Naive thymus-derived CD4-positive, alpha-beta T cell (primary cell): ENCODE measurements at regions of chr1 and their contacts with region 1.

Region 1: DNA sequence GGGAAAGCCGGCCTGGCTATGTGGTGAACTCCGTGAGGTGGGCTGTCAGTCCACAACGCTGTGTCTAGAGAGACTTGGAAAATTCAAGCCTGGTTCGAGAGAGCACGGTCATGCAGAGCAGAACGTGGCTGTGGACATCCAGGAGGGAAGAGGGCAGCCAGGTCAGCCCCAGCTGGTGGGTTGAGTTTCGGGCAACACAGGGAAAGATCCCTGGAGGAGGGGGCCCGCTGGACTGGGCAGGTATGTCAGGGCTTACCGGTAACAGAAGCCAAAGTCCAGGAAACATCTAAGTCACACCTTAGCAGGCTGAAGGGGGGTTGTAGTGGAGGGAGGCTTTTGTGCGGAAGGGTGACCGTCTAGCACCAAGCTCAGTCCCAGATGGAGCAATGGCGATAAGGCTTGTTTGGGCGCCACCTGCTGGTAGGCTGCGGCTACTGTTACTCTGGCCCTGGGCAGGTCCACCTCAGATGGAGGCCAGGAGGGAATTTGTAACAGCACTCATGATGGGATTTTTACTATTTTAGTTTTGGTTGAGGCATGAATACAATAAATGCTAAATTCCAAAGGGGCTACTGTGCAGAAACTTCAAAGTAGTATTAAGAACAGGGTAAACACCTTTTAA is 143.3 kb upstream of the ZNF644 start:
- DNase-seq: peak; percentile 5 to 72 (median 42)
- ATAC-seq: peak; percentile 78
- H3K4me3 ChIP-seq: no peak overlapping the region
- H3K4me3 Mint-ChIP-seq: no peak overlapping the region
- H3K27ac ChIP-seq: no peak overlapping the region
- H3K27ac Mint-ChIP-seq: peak overlapping the region in 1 of 9 donors; percentile 49
- H3K4me1 ChIP-seq: no peaks in the 10 kb centered on the region
- H3K4me1 Mint-ChIP-seq: peaks cover 0 to 6% (median 0%) of the 10 kb centered on the region in 7 donors
- H3K27me3 ChIP-seq: no peaks in the 10 kb centered on the region
- H3K27me3 Mint-ChIP-seq: peaks cover 0 to 8% (median 0%) of the 10 kb centered on the region in 5 donors

Region 2: DNA sequence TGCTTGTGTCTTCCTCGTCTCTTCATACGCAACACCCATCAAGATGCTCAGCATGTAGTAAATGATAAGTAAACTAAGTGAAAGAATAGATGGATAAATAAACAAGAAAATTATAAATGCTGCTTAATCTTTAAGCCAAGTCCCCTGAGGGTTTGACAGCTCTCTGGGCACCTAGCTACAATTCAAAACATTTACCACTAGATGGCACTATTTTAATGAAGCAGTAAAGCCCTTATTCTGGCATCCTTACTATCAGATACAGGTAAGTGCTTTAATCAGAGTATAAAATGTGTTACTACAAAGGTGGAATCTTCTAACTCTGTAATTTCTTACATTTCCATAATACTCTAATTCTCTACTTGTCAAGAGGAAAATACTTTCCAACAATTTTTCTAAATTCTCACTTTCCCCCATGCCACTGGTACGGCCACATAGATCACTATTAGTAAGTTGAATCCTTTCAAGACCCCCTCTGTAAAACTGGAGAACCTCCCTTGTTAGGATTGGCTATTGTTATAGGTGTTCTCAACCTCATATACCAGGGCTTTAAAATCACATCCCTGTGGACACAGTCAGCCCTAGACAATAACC is 585.8 kb before region 1 on chr1:
- CTCF ChIA-PET with region 1: interaction called, 9 read pairs
- POLR2A ChIA-PET with region 1: no interaction called
- intact Hi-C with region 1: loop called in 1 of 2 experiments (anchors 2 kb)
- DNase-seq: peak in 6 of 9 donors; percentile 12 to 49 (median 34)
- ATAC-seq: no peak
- H3K4me3 ChIP-seq: no peak overlapping the region
- H3K4me3 Mint-ChIP-seq: no peak overlapping the region
- H3K27ac ChIP-seq: no peak overlapping the region
- H3K27ac Mint-ChIP-seq: no peak overlapping the region
- H3K4me1 ChIP-seq: no peaks in the 10 kb centered on the region
- H3K4me1 Mint-ChIP-seq: no peaks in the 10 kb centered on the region
- H3K27me3 ChIP-seq: no peaks in the 10 kb centered on the region
- H3K27me3 Mint-ChIP-seq: peaks cover 0 to 7% (median 4%) of the 10 kb centered on the region in 5 donors

Region 3: DNA sequence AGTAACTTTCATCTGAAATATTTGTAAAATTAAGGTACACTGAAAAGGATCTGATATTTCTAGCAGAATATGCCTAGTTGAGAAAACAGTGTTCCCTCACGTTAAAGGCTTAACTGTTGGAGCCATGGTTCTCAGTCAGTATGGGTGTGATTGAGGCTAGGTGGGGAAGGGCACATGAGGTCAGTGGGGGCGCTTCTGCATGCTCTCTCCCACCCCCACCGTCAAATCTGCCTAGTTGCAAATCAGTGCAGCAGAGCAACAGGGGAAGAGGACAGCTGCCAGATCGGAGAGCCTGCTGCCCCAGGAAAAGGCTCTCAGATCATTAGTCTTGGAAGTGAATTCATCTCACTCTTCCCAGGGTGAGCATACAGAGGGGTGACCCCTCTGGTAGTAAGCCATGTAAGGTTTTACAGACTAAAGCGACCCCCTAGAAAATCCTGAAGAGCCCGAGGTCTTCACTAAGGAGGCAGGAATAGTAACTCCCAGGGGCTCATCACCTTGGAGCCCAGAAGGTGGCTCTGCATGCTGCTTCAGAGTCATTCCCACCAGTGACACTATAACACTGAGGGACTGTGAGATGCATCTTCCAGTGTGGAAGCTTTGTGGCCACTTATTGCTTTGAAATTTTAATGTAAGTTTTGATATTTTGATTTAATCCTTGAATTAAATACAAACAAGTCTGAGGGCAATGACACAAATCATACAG is 365.0 kb before region 1 on chr1:
- CTCF ChIA-PET with region 1: no interaction called
- POLR2A ChIA-PET with region 1: no interaction called
- intact Hi-C with region 1: loop called in 1 of 2 experiments (anchors 10 kb)
- DNase-seq: no peak
- ATAC-seq: no peak
- H3K4me3 ChIP-seq: no peak overlapping the region
- H3K4me3 Mint-ChIP-seq: no peak overlapping the region
- H3K27ac ChIP-seq: no peak overlapping the region
- H3K27ac Mint-ChIP-seq: no peak overlapping the region
- H3K4me1 ChIP-seq: no peaks in the 10 kb centered on the region
- H3K4me1 Mint-ChIP-seq: no peaks in the 10 kb centered on the region
- H3K27me3 ChIP-seq: peaks cover 0 to 3% of the 10 kb centered on the region in 2 donors
- H3K27me3 Mint-ChIP-seq: peaks cover 27 to 49% (median 42%) of the 10 kb centered on the region in 5 donors

Region 4: GRCh38 chr1:91021686-91022517 is 143.2 kb before region 1 on chr1 and contains the start of gene ZNF644:
- CTCF ChIA-PET with region 1: interaction called, 6 read pairs
- POLR2A ChIA-PET with region 1: no interaction called
- intact Hi-C with region 1: loop called (anchors 1 to 5 kb)
- DNase-seq: peak; percentile 81 to 95 (median 93)
- ATAC-seq: peak; percentile 91
- H3K4me3 ChIP-seq: peak within 1 kb of the TSS; percentile 62
- H3K4me3 Mint-ChIP-seq: peak within 1 kb of the TSS; percentile 90 to 97 (median 96)
- H3K27ac ChIP-seq: peak within 1 kb of the TSS; percentile 99
- H3K27ac Mint-ChIP-seq: peak within 1 kb of the TSS; percentile 95 to 100 (median 98)
- H3K4me1 ChIP-seq: peaks cover 37 to 45% of the 10 kb centered on the region in 2 donors
- H3K4me1 Mint-ChIP-seq: peaks cover 37 to 83% (median 68%) of the 10 kb centered on the region in 7 donors
- H3K27me3 ChIP-seq: no peaks in the 10 kb centered on the region
- H3K27me3 Mint-ChIP-seq: peaks cover 0 to 2% (median 0%) of the 10 kb centered on the region in 5 donors
- total RNA-seq, gene ZNF644: 63.5 to 117 (median 85.2) TPM

Region 5: DNA sequence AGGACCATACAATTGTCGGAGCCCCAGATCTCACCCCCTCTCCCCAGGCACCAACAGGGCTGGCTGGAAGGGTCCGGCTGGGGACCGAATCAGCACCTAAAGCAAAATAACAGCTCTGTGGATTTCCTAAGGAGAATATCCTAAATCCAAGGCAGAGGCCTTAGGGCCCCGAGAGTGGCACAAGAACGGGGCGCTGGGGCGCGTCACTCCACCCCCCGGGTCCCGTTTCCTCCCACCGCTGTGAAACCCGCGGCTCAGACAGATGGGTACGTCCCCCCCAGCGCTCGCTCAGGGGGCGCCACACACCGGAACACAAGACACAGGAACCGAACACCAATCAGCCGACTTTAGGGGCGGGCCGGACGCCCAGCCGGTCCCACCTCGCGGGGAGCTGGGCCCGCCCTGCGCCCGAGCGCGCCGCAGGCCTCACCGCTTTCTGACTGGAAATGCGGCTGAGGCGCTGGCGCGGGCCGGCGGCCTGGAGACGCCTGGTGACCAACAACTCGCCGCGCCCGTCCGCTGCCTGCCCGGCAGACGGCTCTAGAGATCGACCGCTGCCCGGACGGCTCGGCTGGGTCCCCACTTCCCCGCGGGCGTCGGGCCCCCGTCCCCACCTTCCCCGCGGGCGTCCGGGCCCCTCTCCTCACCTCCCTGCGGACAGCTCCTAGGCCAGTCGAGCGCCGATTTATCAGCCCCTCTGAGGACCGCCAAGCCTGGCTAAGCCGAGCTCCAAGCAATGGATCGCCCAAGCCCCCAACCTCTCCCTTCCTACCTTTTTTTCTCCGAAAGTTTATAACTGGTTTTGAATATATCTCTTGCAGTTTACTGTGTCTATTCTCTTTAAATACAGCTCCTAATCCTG is 239.2 kb after region 1 on chr1 and contains the start of gene HFM1:
- CTCF ChIA-PET with region 1: no interaction called
- POLR2A ChIA-PET with region 1: no interaction called
- intact Hi-C with region 1: loop called in 1 of 2 experiments (anchors 2 kb)
- DNase-seq: peak; percentile 12 to 48 (median 38)
- ATAC-seq: peak; percentile 90
- H3K4me3 ChIP-seq: peak within 1 kb of the TSS; percentile 16
- H3K4me3 Mint-ChIP-seq: peak within 1 kb of the TSS; percentile 68 to 85 (median 79)
- H3K27ac ChIP-seq: peak within 1 kb of the TSS; percentile 29
- H3K27ac Mint-ChIP-seq: peak within 1 kb of the TSS in 4 of 9 donors; percentile 14 to 92 (median 36)
- H3K4me1 ChIP-seq: peaks cover 0 to 6% of the 10 kb centered on the region in 2 donors
- H3K4me1 Mint-ChIP-seq: peaks cover 0 to 14% (median 7%) of the 10 kb centered on the region in 7 donors
- H3K27me3 ChIP-seq: peaks cover 0 to 3% of the 10 kb centered on the region in 2 donors
- H3K27me3 Mint-ChIP-seq: peaks cover 27 to 74% (median 57%) of the 10 kb centered on the region in 5 donors
- total RNA-seq, gene HFM1: not detected

Region 6: GRCh38 chr1:91511386-91511785 is 346.2 kb after region 1 on chr1:
- CTCF ChIA-PET with region 1: interaction called, 3 read pairs
- POLR2A ChIA-PET with region 1: no interaction called
- intact Hi-C with region 1: loop called in 1 of 2 experiments (anchors 5 kb)
- DNase-seq: peak in 6 of 9 donors; percentile 22 to 56 (median 43)
- ATAC-seq: peak; percentile 49
- H3K4me3 ChIP-seq: no peak overlapping the region
- H3K4me3 Mint-ChIP-seq: no peak overlapping the region
- H3K27ac ChIP-seq: no peak overlapping the region
- H3K27ac Mint-ChIP-seq: no peak overlapping the region
- H3K4me1 ChIP-seq: peaks cover 0 to 14% of the 10 kb centered on the region in 2 donors
- H3K4me1 Mint-ChIP-seq: peaks cover 0 to 16% (median 5%) of the 10 kb centered on the region in 7 donors
- H3K27me3 ChIP-seq: no peaks in the 10 kb centered on the region
- H3K27me3 Mint-ChIP-seq: no peaks in the 10 kb centered on the region

Region 7: GRCh38 chr1:92298573-92299476 is 1133.7 kb after region 1 on chr1 and contains the starts of genes GLMN and RPAP2:
- CTCF ChIA-PET with region 1: no interaction called
- POLR2A ChIA-PET with region 1: no interaction called
- intact Hi-C with region 1: loop called in 1 of 2 experiments (anchors 10 kb)
- DNase-seq: peak; percentile 55 to 86 (median 75)
- ATAC-seq: peak; percentile 97
- H3K4me3 ChIP-seq: peak within 1 kb of the TSS; percentile 93
- H3K4me3 Mint-ChIP-seq: peak within 1 kb of the TSS; percentile 93 to 99 (median 97)
- H3K27ac ChIP-seq: peak within 1 kb of the TSS; percentile 98
- H3K27ac Mint-ChIP-seq: peak within 1 kb of the TSS; percentile 91 to 99 (median 97)
- H3K4me1 ChIP-seq: peaks cover 10 to 19% of the 10 kb centered on the region in 2 donors
- H3K4me1 Mint-ChIP-seq: peaks cover 30 to 61% (median 48%) of the 10 kb centered on the region in 7 donors
- H3K27me3 ChIP-seq: no peaks in the 10 kb centered on the region
- H3K27me3 Mint-ChIP-seq: no peaks in the 10 kb centered on the region
- total RNA-seq, gene GLMN: 13.9 to 27.0 (median 14.3) TPM
- total RNA-seq, gene RPAP2: 29.5 to 50.7 (median 42.3) TPM